K562 (cell line): ENCODE measurements at regions of chr18 and their contacts with region 1.

Region 1: DNA sequence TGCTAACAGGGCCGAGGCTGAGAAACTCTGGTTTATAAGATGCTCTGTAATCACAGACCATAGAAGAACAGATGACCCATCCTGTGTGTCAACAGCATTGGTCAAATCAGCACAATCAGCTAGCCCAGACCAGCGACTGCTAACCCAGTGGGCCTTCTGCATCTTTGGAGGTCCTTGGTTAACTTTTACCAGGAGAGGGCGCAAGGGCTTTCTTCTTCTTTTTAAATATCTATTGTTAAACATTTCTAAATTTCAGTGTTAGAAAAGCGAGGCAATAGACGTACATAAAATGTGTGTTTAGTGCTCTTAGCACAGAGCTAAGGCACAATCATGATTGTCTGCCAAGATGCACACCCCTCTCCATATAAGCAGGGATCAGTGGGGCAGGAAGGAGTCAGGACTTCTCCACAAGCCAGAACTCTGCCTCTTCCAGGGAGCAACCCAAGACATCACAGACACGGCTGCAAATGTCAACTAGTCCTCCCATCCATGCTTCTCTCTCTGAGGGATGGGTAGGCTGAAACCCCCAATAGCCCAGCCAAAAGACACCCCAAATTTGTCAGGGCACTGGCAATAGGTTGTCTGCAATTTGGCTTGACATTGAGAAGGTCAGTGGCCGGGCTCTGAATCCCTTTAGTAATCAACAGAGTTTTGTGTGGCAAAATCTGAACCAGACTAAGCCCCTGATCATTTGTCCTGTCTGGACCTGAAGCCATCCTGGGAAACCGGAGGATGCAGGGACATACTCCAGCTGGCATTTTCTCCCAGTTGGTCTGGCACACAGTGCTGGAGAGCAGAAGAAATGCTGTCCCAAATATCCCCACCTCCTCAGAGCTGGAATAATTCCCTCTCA is 188.2 kb downstream of the BCL2 start:
- DNase-seq: peak in 3 of 4 experiments; percentile 13 to 36 (median 16)
- ATAC-seq: peak; percentile 67
- H3K4me3 ChIP-seq: no peak overlapping the region
- H3K27ac ChIP-seq: no peak overlapping the region
- H3K4me1 ChIP-seq: no peaks in the 10 kb centered on the region
- H3K27me3 ChIP-seq: peaks cover 0 to 18% of the 10 kb centered on the region in 2 experiments; a peak in 2 of 5 replicates
- CTCF ChIP-seq: peak; percentile 31 to 60 (median 35); a peak in 4 of 6 replicates
- EP300 ChIP-seq: no peak
- POLR2A ChIP-seq: no peak
- RAD21 ChIP-seq: peak; percentile 48 to 64

Region 2: GRCh38 chr18:63216516-63217311 is 85.4 kb after region 1 on chr18:
- CTCF ChIA-PET with region 1: no interaction called
- POLR2A ChIA-PET with region 1: no interaction called
- in situ Hi-C with region 1: no loop called
- intact Hi-C with region 1: loop called (anchors 10 kb)
- DNase-seq: no peak
- ATAC-seq: no peak
- H3K4me3 ChIP-seq: no peak overlapping the region
- H3K27ac ChIP-seq: no peak overlapping the region
- H3K4me1 ChIP-seq: no peaks in the 10 kb centered on the region; a peak in 2 of 5 replicates
- H3K27me3 ChIP-seq: no peaks in the 10 kb centered on the region
- CTCF ChIP-seq: no peak
- EP300 ChIP-seq: no peak
- POLR2A ChIP-seq: no peak
- RAD21 ChIP-seq: no peak

Region 3: GRCh38 chr18:63320046-63320689 is 188.8 kb after region 1 on chr18:
- CTCF ChIA-PET with region 1: interaction called, 7 read pairs
- POLR2A ChIA-PET with region 1: no interaction called
- in situ Hi-C with region 1: no loop called
- intact Hi-C with region 1: loop called (anchors 5 kb)
- DNase-seq: peak; percentile 56 to 77 (median 72)
- ATAC-seq: peak; percentile 88
- H3K4me3 ChIP-seq: peak overlapping the region; percentile 46
- H3K27ac ChIP-seq: peak overlapping the region; percentile 60; the same call in 1 of the 3 replicates
- H3K4me1 ChIP-seq: peaks cover 7 to 17% of the 10 kb centered on the region in 2 experiments; a peak in 4 of 5 replicates
- H3K27me3 ChIP-seq: peaks cover 0 to 5% of the 10 kb centered on the region in 2 experiments; a peak in 2 of 5 replicates
- CTCF ChIP-seq: no peak
- EP300 ChIP-seq: no peak
- POLR2A ChIP-seq: no peak
- RAD21 ChIP-seq: no peak

Region 4: DNA sequence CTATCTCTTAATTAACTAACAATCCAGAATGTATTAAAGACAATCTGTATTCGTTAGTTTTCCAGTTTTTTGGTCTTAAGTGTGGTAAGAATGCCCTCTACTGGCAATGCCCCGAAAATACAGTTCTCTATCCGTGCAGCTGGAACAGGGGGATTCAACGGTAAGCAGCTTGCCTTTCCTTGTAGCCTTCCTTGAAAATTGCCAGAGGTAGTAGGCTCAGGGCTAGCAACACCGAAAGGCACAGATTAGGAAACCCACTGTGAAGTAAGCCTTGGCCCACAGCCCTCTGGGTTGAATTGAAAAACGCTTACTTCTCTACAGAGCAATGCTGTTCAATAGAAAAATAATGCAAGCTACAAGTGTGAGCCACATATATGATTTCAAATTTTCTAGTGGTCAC is 308.0 kb after region 1 on chr18:
- CTCF ChIA-PET with region 1: interaction called, 4 read pairs
- POLR2A ChIA-PET with region 1: no interaction called
- in situ Hi-C with region 1: loop called (anchors 10 kb)
- intact Hi-C with region 1: loop called (anchors 2 kb)
- DNase-seq: peak; percentile 43 to 52 (median 46)
- ATAC-seq: peak; percentile 81
- H3K4me3 ChIP-seq: no peak overlapping the region
- H3K27ac ChIP-seq: no peak overlapping the region
- H3K4me1 ChIP-seq: no peaks in the 10 kb centered on the region
- H3K27me3 ChIP-seq: peaks cover 0 to 4% of the 10 kb centered on the region in 2 experiments; a peak in 1 of 5 replicates
- CTCF ChIP-seq: peak; percentile 50 to 77 (median 66)
- EP300 ChIP-seq: no peak
- POLR2A ChIP-seq: no peak
- RAD21 ChIP-seq: peak; percentile 44 to 72